ENCODE measurements at regions of chr19 and their contacts with region 1.

Region 1: GRCh38 chr19:47348819-47349795 is at the start of gene DHX34:
- DNase-seq: peak; percentile 100
- ATAC-seq: peak; percentile 98
- H3K4me3 ChIP-seq: peak within 1 kb of the TSS; percentile 83 to 98 (median 91)
- H3K4me3 Mint-ChIP-seq: peak within 1 kb of the TSS; percentile 99
- H3K27ac ChIP-seq: peak within 1 kb of the TSS; percentile 52 to 86
- H3K27ac Mint-ChIP-seq: peak within 1 kb of the TSS; percentile 92
- H3K4me1 ChIP-seq: peaks cover 10 to 16% of the 10 kb centered on the region in 2 donors
- H3K4me1 Mint-ChIP-seq: peaks cover 37% of the 10 kb centered on the region
- H3K27me3 ChIP-seq: no peaks in the 10 kb centered on the region
- H3K27me3 Mint-ChIP-seq: no peaks in the 10 kb centered on the region
- CTCF ChIP-seq: peak; percentile 88
- total RNA-seq, gene DHX34: 24.3 and 25.1 TPM in 2 replicates

Region 2: DNA sequence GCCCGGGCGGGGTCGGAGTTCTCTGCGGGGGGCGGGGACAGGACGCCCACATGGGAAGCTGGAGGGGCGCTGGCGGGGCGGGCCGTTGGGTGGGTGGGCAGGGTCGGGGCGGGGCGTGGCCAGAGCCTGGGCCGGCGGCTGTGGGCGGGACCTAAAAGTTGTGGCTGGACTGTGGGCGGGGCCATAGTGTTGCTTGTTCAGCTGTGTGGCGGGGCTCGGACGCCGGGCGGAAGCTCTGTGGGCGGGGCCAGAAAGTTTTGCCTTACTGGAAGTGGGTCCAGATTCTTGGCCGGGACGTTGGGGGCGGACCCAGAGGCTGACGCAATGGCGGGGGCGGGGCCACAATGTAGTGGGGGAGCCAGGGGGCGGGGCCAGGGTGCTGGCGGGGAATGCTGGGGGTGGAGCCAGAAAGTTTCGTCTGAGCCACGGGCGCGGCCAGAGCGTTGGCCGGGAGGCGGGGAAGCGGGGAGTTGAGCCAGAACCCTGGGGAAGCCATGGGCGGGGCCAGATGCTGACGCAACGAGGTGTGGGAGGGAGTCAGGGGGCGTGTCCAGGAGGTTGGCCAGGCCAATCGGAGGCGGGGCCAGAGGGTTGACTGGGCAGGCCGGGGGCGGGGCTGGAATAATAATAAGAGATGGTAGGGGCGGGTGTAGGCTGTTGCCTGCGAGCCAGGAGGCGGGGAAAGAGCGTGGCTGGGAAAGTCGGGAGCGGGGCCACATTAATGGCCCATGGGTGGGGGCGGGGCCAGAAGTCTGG is 92.2 kb before region 1 on chr19:
- CTCF ChIA-PET with region 1: interaction called, 7 read pairs
- POLR2A ChIA-PET with region 1: interaction called, 4 read pairs
- intact Hi-C with region 1: loop called (anchors 1 kb)
- DNase-seq: peak; percentile 98
- ATAC-seq: peak; percentile 77
- H3K4me3 ChIP-seq: peak overlapping the region; percentile 38 to 71 (median 62)
- H3K4me3 Mint-ChIP-seq: peak overlapping the region; percentile 92
- H3K27ac ChIP-seq: peak overlapping the region; percentile 73 to 94
- H3K27ac Mint-ChIP-seq: peak overlapping the region; percentile 95
- H3K4me1 ChIP-seq: peaks cover 14 to 20% of the 10 kb centered on the region in 2 donors
- H3K4me1 Mint-ChIP-seq: peaks cover 40% of the 10 kb centered on the region
- H3K27me3 ChIP-seq: no peaks in the 10 kb centered on the region
- H3K27me3 Mint-ChIP-seq: no peaks in the 10 kb centered on the region
- CTCF ChIP-seq: no peak

Region 3: GRCh38 chr19:47273313-47273977 is 75.7 kb before region 1 on chr19:
- CTCF ChIA-PET with region 1: interaction called, 6 read pairs
- POLR2A ChIA-PET with region 1: interaction called, 6 read pairs
- intact Hi-C with region 1: loop called (anchors 1 kb)
- DNase-seq: peak; percentile 91
- ATAC-seq: peak; percentile 56
- H3K4me3 ChIP-seq: peak overlapping the region; percentile 54 to 99 (median 96)
- H3K4me3 Mint-ChIP-seq: peak overlapping the region; percentile 97
- H3K27ac ChIP-seq: peak overlapping the region; percentile 94 to 98
- H3K27ac Mint-ChIP-seq: peak overlapping the region; percentile 99
- H3K4me1 ChIP-seq: peaks cover 12 to 22% of the 10 kb centered on the region in 2 donors
- H3K4me1 Mint-ChIP-seq: peaks cover 22% of the 10 kb centered on the region
- H3K27me3 ChIP-seq: no peaks in the 10 kb centered on the region
- H3K27me3 Mint-ChIP-seq: no peaks in the 10 kb centered on the region
- CTCF ChIP-seq: no peak

Region 4: GRCh38 chr19:47296036-47296435 is 53.1 kb before region 1 on chr19:
- CTCF ChIA-PET with region 1: interaction called, 6 read pairs
- POLR2A ChIA-PET with region 1: interaction called, 11 read pairs
- intact Hi-C with region 1: no loop called
- DNase-seq: peak; percentile 86
- ATAC-seq: peak; percentile 80
- H3K4me3 ChIP-seq: no peak overlapping the region
- H3K4me3 Mint-ChIP-seq: no peak overlapping the region
- H3K27ac ChIP-seq: no peak overlapping the region
- H3K27ac Mint-ChIP-seq: no peak overlapping the region
- H3K4me1 ChIP-seq: peaks cover 4 to 18% of the 10 kb centered on the region in 2 donors
- H3K4me1 Mint-ChIP-seq: peaks cover 13% of the 10 kb centered on the region
- H3K27me3 ChIP-seq: peaks cover 0 to 6% (median 1%) of the 10 kb centered on the region in 4 experiments
- H3K27me3 Mint-ChIP-seq: no peaks in the 10 kb centered on the region
- CTCF ChIP-seq: peak; percentile 78

Region 5: DNA sequence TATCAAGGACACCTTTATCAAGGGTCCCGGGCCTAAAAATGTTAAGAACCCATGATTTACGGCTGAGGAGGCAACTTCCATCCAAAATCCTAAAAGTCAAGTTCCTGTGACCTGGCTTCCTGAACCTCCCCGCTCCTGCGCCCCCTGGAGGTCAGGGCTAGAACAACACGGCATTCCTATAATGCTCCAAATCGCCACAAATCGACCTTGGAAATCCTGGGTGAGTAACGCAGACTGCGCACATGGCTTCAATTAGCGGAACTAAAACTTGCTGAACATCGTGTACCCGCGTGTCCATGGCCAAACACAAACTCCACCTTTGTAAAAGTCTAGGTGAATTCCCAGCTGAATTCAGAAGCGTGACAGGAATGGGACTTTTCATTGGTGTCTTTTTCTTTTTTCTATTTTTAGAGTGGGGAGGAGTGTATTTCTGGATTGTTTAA is 43.8 kb before region 1 on chr19:
- CTCF ChIA-PET with region 1: no interaction called
- POLR2A ChIA-PET with region 1: no interaction called
- intact Hi-C with region 1: loop called (anchors 5 kb)
- DNase-seq: peak; percentile 71
- ATAC-seq: peak; percentile 56
- H3K4me3 ChIP-seq: no peak overlapping the region
- H3K4me3 Mint-ChIP-seq: peak overlapping the region; percentile 12
- H3K27ac ChIP-seq: no peak overlapping the region
- H3K27ac Mint-ChIP-seq: no peak overlapping the region
- H3K4me1 ChIP-seq: peaks cover 11% of the 10 kb centered on the region in 2 donors
- H3K4me1 Mint-ChIP-seq: peaks cover 15% of the 10 kb centered on the region
- H3K27me3 ChIP-seq: peaks cover 0 to 21% (median 2%) of the 10 kb centered on the region in 4 experiments
- H3K27me3 Mint-ChIP-seq: peaks cover 18% of the 10 kb centered on the region
- CTCF ChIP-seq: peak; percentile 87

Region 6: GRCh38 chr19:47324502-47324901 is 24.6 kb before region 1 on chr19:
- CTCF ChIA-PET with region 1: no interaction called
- POLR2A ChIA-PET with region 1: no interaction called
- intact Hi-C with region 1: no loop called
- DNase-seq: no peak
- ATAC-seq: no peak
- H3K4me3 ChIP-seq: no peak overlapping the region
- H3K4me3 Mint-ChIP-seq: no peak overlapping the region
- H3K27ac ChIP-seq: no peak overlapping the region
- H3K27ac Mint-ChIP-seq: no peak overlapping the region
- H3K4me1 ChIP-seq: peaks cover 0 to 4% of the 10 kb centered on the region in 2 donors
- H3K4me1 Mint-ChIP-seq: no peaks in the 10 kb centered on the region
- H3K27me3 ChIP-seq: peaks cover 0 to 4% (median 2%) of the 10 kb centered on the region in 4 experiments
- H3K27me3 Mint-ChIP-seq: peaks cover 22% of the 10 kb centered on the region
- CTCF ChIP-seq: no peak

Region 7: DNA sequence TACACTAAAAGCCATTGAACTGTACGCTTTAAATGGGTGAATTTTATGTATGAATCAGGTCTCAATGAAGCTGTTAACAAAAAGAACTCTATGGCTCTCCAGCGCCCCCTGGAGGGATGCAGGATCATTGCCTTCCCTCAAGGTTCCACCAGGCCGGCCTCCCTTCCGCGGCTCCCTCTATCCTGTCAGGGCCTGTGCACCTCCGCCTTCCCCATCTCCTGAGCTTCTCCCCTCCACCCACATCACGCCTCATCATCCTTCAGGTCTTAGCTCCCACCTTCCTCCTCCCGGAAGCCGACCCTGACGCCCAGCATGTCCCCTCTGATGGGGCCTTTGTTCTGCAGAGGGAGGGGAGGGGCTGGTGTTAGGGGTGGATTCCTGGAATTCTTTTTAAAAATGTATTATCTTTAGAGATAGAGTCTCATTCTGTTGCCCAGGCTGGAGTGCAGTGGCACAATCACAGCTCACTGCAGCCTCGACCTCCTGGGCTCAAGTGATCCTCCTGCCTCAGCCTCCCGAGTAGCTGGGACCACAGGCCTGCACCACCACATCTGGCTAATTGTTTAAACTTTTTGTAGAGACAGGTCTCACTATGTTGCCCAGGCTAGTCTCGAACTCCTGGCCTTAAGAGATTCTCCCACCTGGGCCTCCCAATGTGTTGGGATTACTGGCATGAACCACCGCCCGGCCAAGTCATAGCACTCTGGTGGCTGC is 42.6 kb after region 1 on chr19:
- CTCF ChIA-PET with region 1: interaction called, 17 read pairs
- POLR2A ChIA-PET with region 1: no interaction called
- intact Hi-C with region 1: no loop called
- DNase-seq: peak; percentile 77
- ATAC-seq: peak; percentile 68
- H3K4me3 ChIP-seq: no peak overlapping the region
- H3K4me3 Mint-ChIP-seq: no peak overlapping the region
- H3K27ac ChIP-seq: no peak overlapping the region
- H3K27ac Mint-ChIP-seq: no peak overlapping the region
- H3K4me1 ChIP-seq: peaks cover 0 to 7% of the 10 kb centered on the region in 2 donors
- H3K4me1 Mint-ChIP-seq: peaks cover 7% of the 10 kb centered on the region
- H3K27me3 ChIP-seq: peaks cover 0 to 3% (median 0%) of the 10 kb centered on the region in 4 experiments
- H3K27me3 Mint-ChIP-seq: peaks cover 33% of the 10 kb centered on the region
- CTCF ChIP-seq: peak; percentile 93

Region 8: GRCh38 chr19:47456721-47457478 is 107.8 kb after region 1 on chr19:
- CTCF ChIA-PET with region 1: no interaction called
- POLR2A ChIA-PET with region 1: no interaction called
- intact Hi-C with region 1: no loop called
- DNase-seq: no peak
- ATAC-seq: no peak
- H3K4me3 ChIP-seq: no peak overlapping the region
- H3K4me3 Mint-ChIP-seq: no peak overlapping the region
- H3K27ac ChIP-seq: no peak overlapping the region
- H3K27ac Mint-ChIP-seq: no peak overlapping the region
- H3K4me1 ChIP-seq: no peaks in the 10 kb centered on the region
- H3K4me1 Mint-ChIP-seq: no peaks in the 10 kb centered on the region
- H3K27me3 ChIP-seq: peaks cover 0 to 55% (median 27%) of the 10 kb centered on the region in 4 experiments
- H3K27me3 Mint-ChIP-seq: peaks cover 29% of the 10 kb centered on the region
- CTCF ChIP-seq: no peak

Measured in B cell (primary cell).